Common myeloid progenitor, CD34-positive (primary cell): ENCODE measurements at regions of chr11 and their contacts with region 1.

Region 1: GRCh38 chr11:67317205-67317887 is 14.0 kb downstream of the SSH3 start:
- DNase-seq: peak; percentile 95 to 98 (median 96)
- H3K4me3 ChIP-seq: peak overlapping the region; percentile 53 to 91 (median 86)
- H3K27ac ChIP-seq: peak overlapping the region; percentile 25 to 80
- H3K4me1 ChIP-seq: peaks cover 9 to 30% (median 24%) of the 10 kb centered on the region in 4 experiments
- H3K27me3 ChIP-seq: no peaks in the 10 kb centered on the region

Region 2: GRCh38 chr11:67252831-67253239 is 64.5 kb before region 1 on chr11:
- CTCF ChIA-PET with region 1: interaction called, 23 read pairs
- POLR2A ChIA-PET with region 1: interaction called, 6 read pairs
- DNase-seq: peak; percentile 71 to 88 (median 87)
- H3K4me3 ChIP-seq: no peak overlapping the region
- H3K27ac ChIP-seq: no peak overlapping the region
- H3K4me1 ChIP-seq: peaks cover 0 to 8% (median 3%) of the 10 kb centered on the region in 4 experiments
- H3K27me3 ChIP-seq: no peaks in the 10 kb centered on the region

Region 3: DNA sequence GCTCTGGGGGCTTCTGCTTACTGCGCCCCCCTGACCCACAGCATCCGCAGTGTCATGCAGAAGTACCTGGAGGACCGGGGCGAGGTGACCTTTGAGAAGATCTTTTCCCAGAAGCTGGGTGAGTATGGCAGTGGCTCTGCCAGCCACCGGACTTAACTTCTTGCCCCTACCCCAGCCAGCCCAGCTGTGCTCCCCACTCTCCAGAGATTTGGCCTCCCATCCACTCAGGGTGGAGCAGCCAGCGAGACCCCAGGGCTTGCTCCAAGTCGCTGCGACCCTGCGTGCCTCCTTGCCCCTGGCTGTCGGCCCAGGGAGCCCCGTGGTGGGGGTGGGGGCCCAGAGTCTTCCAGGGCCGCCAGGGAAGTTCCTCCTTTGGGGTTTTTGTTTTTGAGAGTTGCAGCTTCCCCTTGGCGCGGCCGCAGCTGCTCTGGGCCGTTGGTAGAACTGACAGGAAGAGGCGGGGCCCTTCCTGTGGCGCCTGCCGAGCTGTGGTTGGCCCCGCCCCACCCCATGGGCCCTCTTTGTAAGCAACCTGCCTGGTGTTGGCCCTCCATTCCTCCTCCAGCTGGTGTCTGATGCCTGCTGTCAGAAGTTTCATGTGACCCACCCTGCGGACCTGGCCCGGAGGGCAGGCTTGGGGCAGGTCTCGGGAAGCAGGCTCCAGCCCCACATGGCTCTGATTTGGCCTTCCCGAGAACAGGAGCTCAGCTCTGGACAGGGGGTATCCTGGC is 40.0 kb before region 1 on chr11:
- CTCF ChIA-PET with region 1: interaction called, 43 read pairs
- POLR2A ChIA-PET with region 1: interaction called, 10 read pairs
- DNase-seq: peak; percentile 98 to 100 (median 99)
- H3K4me3 ChIP-seq: peak overlapping the region in 6 of 7 experiments; percentile 26 to 69 (median 54)
- H3K27ac ChIP-seq: peak overlapping the region; percentile 96 to 97
- H3K4me1 ChIP-seq: peaks cover 6 to 99% (median 98%) of the 10 kb centered on the region in 4 experiments
- H3K27me3 ChIP-seq: no peaks in the 10 kb centered on the region

Region 4: DNA sequence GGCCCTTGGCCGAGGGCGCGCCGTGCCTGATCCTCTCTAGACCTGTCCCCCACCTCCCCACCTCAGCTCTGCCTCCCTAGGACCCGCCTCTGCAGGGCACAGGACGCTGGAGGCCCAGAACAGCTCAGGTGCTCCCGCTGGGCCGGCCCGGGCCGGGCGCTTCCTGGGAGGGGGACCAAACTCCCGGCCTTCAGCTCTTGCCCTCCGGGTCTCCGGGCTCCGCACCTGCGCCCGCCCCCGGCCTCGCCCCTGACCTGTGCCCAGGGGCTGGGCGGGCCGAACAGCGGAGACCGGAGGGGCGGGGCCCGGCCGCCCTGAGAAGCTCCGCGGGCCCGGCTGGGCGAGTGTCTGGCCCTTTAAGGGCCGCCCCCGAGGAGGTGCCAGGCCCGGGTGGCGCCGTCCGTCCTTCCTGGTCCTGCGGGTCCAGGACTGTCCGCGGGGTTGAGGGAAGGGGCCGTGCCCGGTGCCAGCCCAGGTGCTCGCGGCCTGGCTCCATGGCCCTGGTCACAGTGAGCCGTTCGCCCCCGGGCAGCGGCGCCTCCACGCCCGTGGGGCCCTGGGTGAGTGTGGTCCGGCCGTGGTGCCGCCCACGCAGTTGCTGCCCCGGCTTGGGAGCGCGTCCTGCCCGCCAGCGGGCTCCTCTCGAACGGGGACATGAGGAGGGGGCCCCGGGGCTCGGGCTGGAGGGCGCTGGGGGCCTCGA is 14.1 kb before region 1 on chr11 and contains the start of gene SSH3:
- CTCF ChIA-PET with region 1: interaction called, 23 read pairs
- POLR2A ChIA-PET with region 1: interaction called, 19 read pairs
- DNase-seq: peak in 2 of 3 donors; percentile 42 to 59
- H3K4me3 ChIP-seq: peak within 1 kb of the TSS; percentile 65 to 88 (median 78)
- H3K27ac ChIP-seq: peak within 1 kb of the TSS in 1 of 2 experiments; percentile 64
- H3K4me1 ChIP-seq: peaks cover 0 to 33% (median 24%) of the 10 kb centered on the region in 4 experiments
- H3K27me3 ChIP-seq: no peaks in the 10 kb centered on the region

Region 5: GRCh38 chr11:67382276-67383136 is 65.2 kb after region 1 on chr11:
- CTCF ChIA-PET with region 1: interaction called, 17 read pairs
- POLR2A ChIA-PET with region 1: no interaction called
- DNase-seq: peak; percentile 70 to 82 (median 73)
- H3K4me3 ChIP-seq: no peak overlapping the region
- H3K27ac ChIP-seq: no peak overlapping the region
- H3K4me1 ChIP-seq: peaks cover 0 to 46% (median 29%) of the 10 kb centered on the region in 4 experiments
- H3K27me3 ChIP-seq: no peaks in the 10 kb centered on the region

Region 6: DNA sequence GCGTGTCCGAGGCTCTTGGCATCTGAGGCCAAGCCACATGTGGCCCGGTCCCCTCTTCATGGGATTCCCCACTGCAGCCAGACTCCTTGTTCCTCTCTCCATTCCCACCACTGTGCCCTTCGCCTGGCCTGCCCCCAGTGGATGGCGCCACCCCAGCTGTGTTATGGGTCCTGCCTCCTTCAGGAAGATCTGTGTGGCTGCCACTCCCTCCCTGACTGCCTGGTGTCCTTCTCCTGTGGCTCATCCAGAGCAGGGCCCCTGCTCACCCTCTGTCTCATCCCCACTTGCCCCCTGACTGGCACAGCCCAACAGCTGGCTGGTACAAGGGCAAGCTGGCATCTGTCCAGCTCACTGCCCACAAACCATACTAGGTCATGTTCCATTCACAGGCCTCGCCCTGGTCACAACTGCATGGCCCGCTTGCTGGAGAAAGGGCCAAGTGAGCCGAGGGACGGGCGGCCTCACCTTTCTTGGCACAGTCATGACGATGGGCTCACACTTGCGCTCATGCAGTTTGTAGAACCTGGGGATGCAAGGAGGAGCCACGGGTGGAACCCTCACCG is 122.1 kb after region 1 on chr11:
- CTCF ChIA-PET with region 1: no interaction called
- POLR2A ChIA-PET with region 1: no interaction called
- DNase-seq: peak in 1 of 3 donors; percentile 42
- H3K4me3 ChIP-seq: peak overlapping the region in 1 of 7 experiments; percentile 20
- H3K27ac ChIP-seq: no peak overlapping the region
- H3K4me1 ChIP-seq: peaks cover 1 to 85% (median 77%) of the 10 kb centered on the region in 4 experiments
- H3K27me3 ChIP-seq: no peaks in the 10 kb centered on the region